H1 (cell line): ENCODE measurements at regions of chr16 and their contacts with region 1.

Region 1: GRCh38 chr16:74064120-74064735 is 232.4 kb upstream of the PSMD7 start:
- DNase-seq: no peak
- H3K4me3 ChIP-seq: no peak overlapping the region
- H3K27ac ChIP-seq: no peak overlapping the region
- H3K4me1 ChIP-seq: peaks cover 0 to 4% (median 2%) of the 10 kb centered on the region in 4 experiments; a peak in 2 of 7 replicates
- H3K27me3 ChIP-seq: no peaks in the 10 kb centered on the region
- CTCF ChIP-seq: no peak
- EP300 ChIP-seq: no peak
- POLR2A ChIP-seq: no peak
- RAD21 ChIP-seq: no peak

Region 2: DNA sequence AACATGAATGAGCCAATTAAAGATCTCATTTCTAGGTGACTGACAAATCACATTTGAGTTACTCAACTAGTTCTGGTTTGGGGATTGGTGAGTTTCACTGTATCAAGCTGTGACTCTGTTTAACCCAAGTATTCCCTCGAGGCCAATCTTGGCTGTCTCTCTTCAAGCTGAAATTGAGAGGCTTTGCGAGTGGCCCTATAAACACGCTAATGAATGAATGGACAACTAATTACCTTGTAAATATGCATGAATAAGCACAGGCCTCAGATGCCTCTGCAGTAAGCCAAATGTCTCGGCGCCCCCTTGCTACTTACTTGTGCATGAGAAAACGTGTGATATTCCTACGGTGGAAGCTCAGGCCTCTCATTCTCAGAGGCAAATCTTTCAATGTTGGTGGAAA is 217.9 kb before region 1 on chr16:
- CTCF ChIA-PET with region 1: no interaction called
- POLR2A ChIA-PET with region 1: no interaction called
- DNase-seq: peak in 1 of 2 experiments; percentile 47
- H3K4me3 ChIP-seq: no peak overlapping the region
- H3K27ac ChIP-seq: no peak overlapping the region
- H3K4me1 ChIP-seq: no peaks in the 10 kb centered on the region
- H3K27me3 ChIP-seq: no peaks in the 10 kb centered on the region
- CTCF ChIP-seq: peak; percentile 35 to 62 (median 44)
- EP300 ChIP-seq: no peak
- POLR2A ChIP-seq: no peak
- RAD21 ChIP-seq: peak; percentile 63 to 68

Region 3: DNA sequence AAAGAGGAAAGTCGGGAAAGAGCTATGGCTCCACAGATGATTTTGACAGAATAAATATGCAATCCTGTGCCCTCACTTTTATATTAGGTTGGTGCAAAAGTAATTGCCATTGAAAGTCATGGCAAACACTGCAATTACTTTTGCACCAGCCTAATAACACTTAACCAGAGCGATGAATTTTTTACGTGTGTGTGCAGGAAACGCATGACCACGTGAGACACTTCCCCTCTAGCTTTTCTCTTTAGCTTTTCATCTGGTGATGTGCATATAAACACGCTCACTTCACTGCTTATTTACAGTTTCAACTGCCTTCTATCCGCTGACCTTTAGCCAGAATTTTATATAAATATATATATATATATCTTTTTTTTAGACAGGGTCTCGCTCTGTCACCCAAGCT is 16.1 kb after region 1 on chr16:
- CTCF ChIA-PET with region 1: no interaction called
- POLR2A ChIA-PET with region 1: no interaction called
- DNase-seq: no peak
- H3K4me3 ChIP-seq: no peak overlapping the region
- H3K27ac ChIP-seq: no peak overlapping the region
- H3K4me1 ChIP-seq: no peaks in the 10 kb centered on the region
- H3K27me3 ChIP-seq: no peaks in the 10 kb centered on the region
- CTCF ChIP-seq: no peak
- EP300 ChIP-seq: no peak
- POLR2A ChIP-seq: no peak
- RAD21 ChIP-seq: no peak

Region 4: GRCh38 chr16:74107795-74108618 is 43.8 kb after region 1 on chr16:
- CTCF ChIA-PET with region 1: interaction called, 10 read pairs
- POLR2A ChIA-PET with region 1: no interaction called
- DNase-seq: peak; percentile 69 to 85
- H3K4me3 ChIP-seq: no peak overlapping the region
- H3K27ac ChIP-seq: no peak overlapping the region
- H3K4me1 ChIP-seq: peaks cover 0 to 5% (median 0%) of the 10 kb centered on the region in 4 experiments; a peak in 3 of 7 replicates
- H3K27me3 ChIP-seq: no peaks in the 10 kb centered on the region
- CTCF ChIP-seq: peak; percentile 78 to 98 (median 90)
- EP300 ChIP-seq: no peak
- POLR2A ChIP-seq: no peak
- RAD21 ChIP-seq: peak; percentile 86 to 88